ENCODE measurements at regions of chr16 and their contacts with region 1.

Region 1: GRCh38 chr16:84277237-84277823 is 17.3 kb upstream of the WFDC1 start:
- DNase-seq: no peak
- H3K4me3 ChIP-seq: no peak overlapping the region
- H3K27me3 ChIP-seq: 0 out of 2 replicates have a peak, but pooled peaks cover 5% of the 10 kb centered on the region
- CTCF ChIP-seq: peak; percentile 88

Region 2: DNA sequence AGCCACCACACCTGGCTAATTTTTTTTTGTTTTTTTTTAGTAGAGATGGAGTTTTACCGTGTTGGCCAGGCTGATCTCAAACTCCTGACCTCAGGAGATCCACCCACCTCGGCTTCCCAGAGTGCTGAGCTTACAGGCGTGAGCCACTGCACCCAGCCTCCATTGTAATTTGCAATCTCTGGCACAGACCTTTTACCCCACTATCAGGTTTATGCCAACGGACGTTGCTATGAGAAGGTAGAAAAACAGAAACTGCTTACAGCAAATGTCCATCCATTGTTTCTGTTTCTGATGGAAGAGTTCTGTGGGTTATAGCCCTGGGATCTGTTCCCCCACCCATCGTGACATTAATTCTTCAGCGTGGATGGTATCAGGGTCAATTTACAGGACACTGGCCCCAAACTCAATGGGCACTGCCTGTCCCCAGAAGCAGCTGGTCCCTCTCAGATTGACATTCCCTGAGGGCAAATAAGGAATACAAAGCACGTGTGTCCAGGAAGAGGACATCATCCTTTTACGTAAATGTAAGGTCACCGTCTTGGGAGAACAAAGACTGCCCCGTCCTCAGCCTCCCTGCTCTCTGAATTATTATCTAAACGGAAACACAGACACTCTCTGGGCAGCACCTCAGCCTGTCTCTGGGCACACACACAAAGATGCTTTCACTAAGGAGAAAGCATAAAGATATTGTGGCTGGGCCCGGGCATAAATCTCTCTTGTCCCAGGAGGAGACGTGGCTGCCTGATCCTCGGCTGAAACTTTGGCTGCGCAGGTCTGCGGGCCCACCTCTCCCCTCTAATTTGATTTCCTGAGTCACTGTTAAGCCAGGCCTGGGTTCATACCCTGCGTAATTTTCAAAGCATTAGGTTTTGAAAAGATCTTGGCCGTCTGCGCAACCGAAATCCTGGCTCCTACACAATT is 42.7 kb before region 1 on chr16:
- CTCF ChIA-PET with region 1: interaction called, 10 read pairs
- POLR2A ChIA-PET with region 1: no interaction called
- DNase-seq: no peak
- H3K4me3 ChIP-seq: no peak overlapping the region
- H3K27me3 ChIP-seq: peaks cover 14% of the 10 kb centered on the region
- CTCF ChIP-seq: no peak

Region 3: DNA sequence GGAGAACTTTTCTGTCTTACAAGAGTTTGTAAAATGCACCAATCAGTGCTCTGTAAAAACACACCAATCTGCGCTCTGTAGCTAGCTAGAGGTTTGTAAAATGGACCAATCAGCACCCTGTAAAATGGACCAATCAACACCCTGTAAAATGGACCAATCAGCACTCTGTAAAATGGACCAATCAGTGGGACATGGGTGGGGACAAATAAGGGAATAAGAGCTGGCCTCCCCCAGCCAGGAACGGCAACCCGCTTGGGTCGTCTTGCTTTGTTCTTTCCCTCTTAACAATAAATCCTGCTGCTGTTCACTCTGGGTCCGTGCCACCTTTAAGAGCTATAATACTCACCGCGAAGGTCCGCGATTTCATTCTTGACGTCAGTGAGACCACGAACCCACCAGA is 19.1 kb before region 1 on chr16:
- CTCF ChIA-PET with region 1: interaction called, 16 read pairs
- POLR2A ChIA-PET with region 1: no interaction called
- DNase-seq: no peak
- H3K4me3 ChIP-seq: no peak overlapping the region
- H3K27me3 ChIP-seq: peaks cover 6% of the 10 kb centered on the region; the same call in 1 of the 2 replicates
- CTCF ChIP-seq: no peak

Region 4: GRCh38 chr16:84308120-84308519 is 30.8 kb after region 1 on chr16:
- CTCF ChIA-PET with region 1: interaction called, 134 read pairs
- POLR2A ChIA-PET with region 1: no interaction called
- DNase-seq: no peak
- H3K4me3 ChIP-seq: no peak overlapping the region
- H3K27me3 ChIP-seq: peaks cover under 1% of the 10 kb centered on the region; the same call in 1 of the 2 replicates
- CTCF ChIP-seq: peak; percentile 75

Region 5: DNA sequence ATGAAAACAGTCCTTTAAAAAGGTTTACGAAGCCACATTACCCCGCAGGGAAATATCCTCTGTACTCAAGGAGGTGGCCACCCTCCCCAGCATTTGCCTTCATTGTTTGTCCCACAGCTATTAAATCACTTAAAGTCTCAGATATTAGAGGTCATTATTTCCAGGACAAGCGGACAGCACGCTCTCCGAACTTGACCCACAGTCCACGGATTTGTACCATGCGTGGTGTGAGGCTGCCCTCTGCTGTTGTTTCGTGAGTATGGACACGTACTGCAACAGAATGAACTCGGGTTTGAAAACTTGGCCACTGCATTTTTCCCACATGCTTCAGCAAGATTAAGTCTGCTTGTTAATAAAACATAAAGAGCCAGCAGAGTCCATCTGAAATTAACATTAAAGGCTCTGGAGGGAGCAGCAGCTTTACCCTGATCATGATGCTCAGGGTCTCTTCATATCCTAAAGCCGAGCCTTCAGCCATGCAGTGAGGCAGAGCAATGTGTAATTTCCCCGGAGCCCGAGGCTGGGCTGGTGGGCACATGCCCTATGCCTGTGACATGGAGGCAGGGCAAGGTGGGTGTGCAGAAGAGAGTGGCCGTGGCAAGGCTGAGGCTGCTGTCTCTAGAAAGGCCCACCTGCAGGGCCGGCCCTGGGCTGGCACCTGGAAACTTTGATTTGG is 207.4 kb after region 1 on chr16:
- CTCF ChIA-PET with region 1: interaction called, 58 read pairs
- POLR2A ChIA-PET with region 1: no interaction called
- DNase-seq: no peak
- H3K4me3 ChIP-seq: no peak overlapping the region
- H3K27me3 ChIP-seq: no peaks in the 10 kb centered on the region
- CTCF ChIP-seq: peak; percentile 74

Measured in BJ (cell line).